H1 (cell line): ENCODE measurements at regions of chr15 and their contacts with region 1.

Region 1: DNA sequence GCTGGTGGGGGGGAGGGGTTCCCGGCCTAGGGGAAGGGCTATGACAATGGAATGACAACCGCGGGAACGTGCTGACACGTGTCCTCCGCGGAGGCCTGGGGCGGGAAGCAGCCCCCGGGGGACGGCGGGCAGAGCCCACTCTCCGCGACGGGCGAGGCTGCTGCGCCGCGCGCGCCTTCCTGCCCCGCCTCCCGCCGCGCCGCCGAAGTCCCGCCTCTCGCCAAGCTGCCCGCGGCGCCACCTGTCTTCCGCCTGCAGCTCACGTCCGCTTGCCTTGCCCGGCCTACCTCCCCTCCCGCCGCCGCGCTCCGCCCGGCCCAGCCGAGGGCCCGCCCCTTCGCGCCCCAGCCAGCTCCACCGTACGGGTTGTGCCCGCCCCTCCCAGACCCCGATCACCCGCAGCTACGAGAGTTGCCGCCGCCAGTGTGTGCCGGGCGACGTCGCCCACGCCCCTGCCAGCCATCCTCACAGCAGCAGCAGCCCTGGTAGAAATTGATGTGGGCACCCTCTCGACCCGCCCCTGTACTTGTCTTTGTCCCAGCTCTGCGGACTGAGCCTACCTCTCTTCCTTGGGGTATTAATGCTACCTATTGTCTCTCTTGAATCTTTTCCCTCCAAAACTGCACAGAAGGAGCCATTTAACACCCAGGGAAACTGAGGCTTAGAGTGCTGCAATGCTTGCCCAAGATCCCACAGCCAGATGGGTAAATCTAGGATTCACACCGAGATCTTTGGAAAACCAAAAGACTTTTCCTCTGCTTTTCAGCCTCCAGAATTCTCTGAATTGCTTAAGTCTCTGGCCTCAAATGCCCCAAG is at the start of gene PARP16:
- DNase-seq: peak in 1 of 2 experiments; percentile 93
- H3K4me3 ChIP-seq: peak within 1 kb of the TSS; percentile 69 to 77 (median 75)
- H3K27ac ChIP-seq: 0 out of 2 replicates have a peak within 1 kb of the TSS, but pooled peaks have one; percentile 31
- H3K4me1 ChIP-seq: peaks cover 0 to 10% (median 7%) of the 10 kb centered on the region in 4 experiments; a peak in 5 of 7 replicates
- H3K27me3 ChIP-seq: peaks cover 0 to 10% (median 10%) of the 10 kb centered on the region in 4 experiments; a peak in 6 of 7 replicates
- CTCF ChIP-seq: peak; percentile 37 to 66 (median 45)
- EP300 ChIP-seq: peak in 1 of 2 experiments; percentile 34; a peak in 1 of 3 replicates
- POLR2A ChIP-seq: peak in 1 of 2 experiments; percentile 69; a peak in 1 of 3 replicates
- RAD21 ChIP-seq: no peak; a peak in 1 of 4 replicates
- total RNA-seq, gene PARP16: 3.7 and 5.0 TPM in 2 replicates

Region 2: GRCh38 chr15:65184868-65185738 is 101.8 kb before region 1 on chr15 and contains the start of gene CLPX:
- CTCF ChIA-PET with region 1: interaction called, 14 read pairs
- POLR2A ChIA-PET with region 1: interaction called, 20 read pairs
- DNase-seq: peak; percentile 87 to 88
- H3K4me3 ChIP-seq: peak within 1 kb of the TSS; percentile 60 to 95 (median 92)
- H3K27ac ChIP-seq: peak within 1 kb of the TSS; percentile 80; the same call in 1 of the 2 replicates
- H3K4me1 ChIP-seq: peaks cover 0 to 2% (median 0%) of the 10 kb centered on the region in 4 experiments; a peak in 2 of 7 replicates
- H3K27me3 ChIP-seq: no peaks in the 10 kb centered on the region
- CTCF ChIP-seq: no peak
- EP300 ChIP-seq: no peak
- POLR2A ChIP-seq: peak; percentile 51 to 86
- RAD21 ChIP-seq: no peak
- total RNA-seq, gene CLPX: 53.6 and 56.4 TPM in 2 replicates

Region 3: GRCh38 chr15:65264863-65265430 is 22.0 kb before region 1 on chr15:
- CTCF ChIA-PET with region 1: interaction called, 114 read pairs
- POLR2A ChIA-PET with region 1: no interaction called
- DNase-seq: no peak
- H3K4me3 ChIP-seq: no peak overlapping the region
- H3K27ac ChIP-seq: no peak overlapping the region
- H3K4me1 ChIP-seq: peaks cover 3 to 10% (median 4%) of the 10 kb centered on the region in 4 experiments; a peak in 5 of 7 replicates
- H3K27me3 ChIP-seq: no peaks in the 10 kb centered on the region
- CTCF ChIP-seq: no peak
- EP300 ChIP-seq: no peak
- POLR2A ChIP-seq: no peak
- RAD21 ChIP-seq: no peak

Region 4: DNA sequence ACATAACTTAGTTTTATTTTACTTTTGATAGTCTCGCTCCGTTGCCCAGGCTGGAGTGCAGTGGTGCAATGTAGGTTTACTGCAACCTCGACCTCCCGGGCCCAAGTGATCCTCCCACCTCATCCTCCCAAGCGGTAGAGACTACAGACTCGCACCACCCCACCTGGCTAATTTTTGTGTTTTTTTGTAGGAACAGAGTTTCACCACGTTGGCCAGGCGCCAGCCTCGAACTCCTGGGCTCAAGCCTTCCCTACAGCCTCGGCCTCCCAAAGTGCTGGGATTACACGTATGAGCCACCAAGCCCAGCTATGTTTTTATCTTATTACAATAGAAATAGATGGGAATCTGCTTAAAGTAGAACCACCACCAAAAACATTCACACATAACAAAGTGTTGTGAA is 11.8 kb after region 1 on chr15:
- CTCF ChIA-PET with region 1: interaction called, 11 read pairs
- POLR2A ChIA-PET with region 1: interaction called, 123 read pairs
- DNase-seq: no peak
- H3K4me3 ChIP-seq: no peak overlapping the region
- H3K27ac ChIP-seq: no peak overlapping the region
- H3K4me1 ChIP-seq: peaks cover 0 to 4% (median under 1%) of the 10 kb centered on the region in 4 experiments; a peak in 1 of 7 replicates
- H3K27me3 ChIP-seq: no peaks in the 10 kb centered on the region
- CTCF ChIP-seq: no peak
- EP300 ChIP-seq: no peak
- POLR2A ChIP-seq: no peak
- RAD21 ChIP-seq: no peak